Activated naive CD4-positive, alpha-beta T cell treated with anti-CD3 and anti-CD28 coated beads for 36 hours (primary cell): ENCODE measurements at regions of chr2 and their contacts with region 1.

Region 1: DNA sequence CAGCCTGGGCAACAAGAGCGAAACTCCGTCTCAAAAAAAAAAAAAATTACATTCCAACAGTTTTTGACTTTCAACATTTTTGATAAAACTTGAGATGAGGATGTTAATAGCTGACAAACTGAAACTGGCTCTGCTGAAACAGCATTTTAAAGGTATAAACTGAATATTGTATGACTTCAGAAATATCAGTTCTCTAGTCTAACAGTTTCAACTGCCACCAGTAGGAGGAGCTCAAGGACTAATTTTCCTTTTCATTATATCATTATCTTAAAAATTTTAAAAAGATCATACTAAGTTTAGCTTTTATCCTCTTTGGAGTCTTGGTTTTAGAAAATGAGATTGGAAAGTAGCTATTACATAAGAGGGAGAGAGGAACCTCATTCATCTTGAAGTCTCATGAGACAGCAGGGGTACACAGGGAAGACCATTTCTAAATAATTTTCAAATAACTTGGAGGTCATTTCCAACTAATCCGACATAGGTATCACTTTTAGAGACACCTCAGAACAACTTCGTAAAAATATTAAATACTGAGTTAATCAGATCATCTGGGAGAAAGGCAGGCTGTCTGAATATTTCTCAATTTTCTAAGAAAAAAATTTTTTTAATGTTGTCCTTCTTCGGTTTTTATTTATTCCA is 37.6 kb upstream of the MCM6 start:
- DNase-seq: peak; percentile 65
- H3K4me3 Mint-ChIP-seq: no peak overlapping the region
- H3K27ac Mint-ChIP-seq: no peak overlapping the region
- H3K4me1 Mint-ChIP-seq: peaks cover 10% of the 10 kb centered on the region
- H3K27me3 Mint-ChIP-seq: no peaks in the 10 kb centered on the region

Region 2: GRCh38 chr2:135424839-135425238 is 489.0 kb before region 1 on chr2:
- CTCF ChIA-PET with region 1: no interaction called
- intact Hi-C with region 1: no loop called
- DNase-seq: no peak
- H3K4me3 Mint-ChIP-seq: no peak overlapping the region
- H3K27ac Mint-ChIP-seq: no peak overlapping the region
- H3K4me1 Mint-ChIP-seq: no peaks in the 10 kb centered on the region
- H3K27me3 Mint-ChIP-seq: no peaks in the 10 kb centered on the region

Region 3: DNA sequence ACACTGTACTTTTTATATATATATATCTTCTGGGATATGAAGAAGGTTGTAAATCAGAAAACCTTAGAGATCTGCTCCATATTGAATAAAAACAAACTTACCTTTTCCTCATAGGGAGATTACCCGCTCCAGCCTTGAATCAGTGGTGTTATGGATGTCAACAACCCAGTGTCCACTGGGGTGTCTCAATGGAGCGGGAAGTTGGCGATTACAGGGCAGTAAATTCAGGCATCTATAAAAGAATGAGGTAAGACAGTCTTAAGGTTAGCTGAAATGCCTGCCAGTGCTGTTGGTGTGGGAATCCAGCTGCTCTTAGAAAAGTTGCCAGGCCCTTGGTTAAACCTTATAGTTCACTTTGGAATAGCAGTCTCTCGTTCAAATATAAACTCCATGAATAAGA is 280.3 kb before region 1 on chr2:
- CTCF ChIA-PET with region 1: no interaction called
- intact Hi-C with region 1: no loop called
- DNase-seq: no peak
- H3K4me3 Mint-ChIP-seq: no peak overlapping the region
- H3K27ac Mint-ChIP-seq: no peak overlapping the region
- H3K4me1 Mint-ChIP-seq: peaks cover 10% of the 10 kb centered on the region
- H3K27me3 Mint-ChIP-seq: no peaks in the 10 kb centered on the region

Region 4: DNA sequence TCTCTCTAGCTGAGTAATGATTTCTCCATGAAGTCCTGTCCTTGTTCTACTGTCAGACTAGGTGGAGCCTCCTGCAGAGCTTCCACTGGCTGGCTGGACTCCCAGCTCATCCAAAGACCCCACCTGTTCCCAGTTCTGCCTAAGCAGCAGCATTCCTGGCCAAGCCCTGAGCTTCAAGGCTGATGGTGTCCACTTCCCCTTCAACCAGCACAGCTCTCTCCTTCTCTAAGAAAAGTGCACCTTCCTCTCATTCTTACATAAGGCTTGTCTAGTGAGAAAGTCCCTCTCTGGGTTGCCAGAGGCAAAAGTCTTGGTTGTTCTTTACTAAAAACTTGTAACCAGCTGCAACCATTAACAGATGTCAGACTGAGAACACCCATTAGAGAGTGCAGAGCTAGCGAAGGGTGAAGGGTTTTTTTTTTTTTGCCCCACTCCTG is 145.2 kb after region 1 on chr2:
- CTCF ChIA-PET with region 1: interaction called, 4 read pairs
- intact Hi-C with region 1: loop called (anchors 2 kb)
- DNase-seq: no peak
- H3K4me3 Mint-ChIP-seq: no peak overlapping the region
- H3K27ac Mint-ChIP-seq: no peak overlapping the region
- H3K4me1 Mint-ChIP-seq: peaks cover 59% of the 10 kb centered on the region
- H3K27me3 Mint-ChIP-seq: no peaks in the 10 kb centered on the region

Region 5: DNA sequence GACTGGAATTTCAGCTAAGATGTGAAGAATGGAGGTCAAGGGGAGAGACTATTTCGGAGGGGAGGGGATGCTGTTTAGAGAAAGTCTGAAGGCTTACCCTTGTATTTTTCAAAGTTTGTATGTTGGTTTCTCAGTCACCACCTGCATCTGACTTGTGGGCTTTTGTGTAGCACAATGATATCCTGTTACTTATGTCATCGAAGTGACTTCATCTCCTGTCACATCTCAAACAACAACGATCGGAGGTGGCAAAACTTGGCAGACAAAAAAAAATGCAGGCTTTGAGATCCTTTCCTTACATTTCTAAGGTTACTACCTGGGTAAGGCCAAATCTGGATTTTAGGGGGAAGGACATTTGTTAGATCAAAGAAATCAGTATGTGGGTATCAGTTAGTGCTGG is 215.8 kb after region 1 on chr2:
- CTCF ChIA-PET with region 1: interaction called, 14 read pairs
- intact Hi-C with region 1: loop called (anchors 1 kb)
- DNase-seq: peak; percentile 57
- H3K4me3 Mint-ChIP-seq: peak overlapping the region; percentile 61
- H3K27ac Mint-ChIP-seq: peak overlapping the region; percentile 88
- H3K4me1 Mint-ChIP-seq: peaks cover 95% of the 10 kb centered on the region
- H3K27me3 Mint-ChIP-seq: no peaks in the 10 kb centered on the region

Region 6: GRCh38 chr2:136212423-136213378 is 298.9 kb after region 1 on chr2:
- CTCF ChIA-PET with region 1: interaction called, 10 read pairs
- intact Hi-C with region 1: loop called (anchors 1 kb)
- DNase-seq: peak; percentile 67
- H3K4me3 Mint-ChIP-seq: no peak overlapping the region
- H3K27ac Mint-ChIP-seq: peak overlapping the region; percentile 3
- H3K4me1 Mint-ChIP-seq: peaks cover 43% of the 10 kb centered on the region
- H3K27me3 Mint-ChIP-seq: no peaks in the 10 kb centered on the region

Region 7: GRCh38 chr2:136255648-136256463 is 342.0 kb after region 1 on chr2:
- CTCF ChIA-PET with region 1: interaction called, 5 read pairs
- intact Hi-C with region 1: loop called (anchors 5 kb)
- DNase-seq: peak; percentile 66
- H3K4me3 Mint-ChIP-seq: no peak overlapping the region
- H3K27ac Mint-ChIP-seq: no peak overlapping the region
- H3K4me1 Mint-ChIP-seq: peaks cover 30% of the 10 kb centered on the region
- H3K27me3 Mint-ChIP-seq: peaks cover 2% of the 10 kb centered on the region

Region 8: DNA sequence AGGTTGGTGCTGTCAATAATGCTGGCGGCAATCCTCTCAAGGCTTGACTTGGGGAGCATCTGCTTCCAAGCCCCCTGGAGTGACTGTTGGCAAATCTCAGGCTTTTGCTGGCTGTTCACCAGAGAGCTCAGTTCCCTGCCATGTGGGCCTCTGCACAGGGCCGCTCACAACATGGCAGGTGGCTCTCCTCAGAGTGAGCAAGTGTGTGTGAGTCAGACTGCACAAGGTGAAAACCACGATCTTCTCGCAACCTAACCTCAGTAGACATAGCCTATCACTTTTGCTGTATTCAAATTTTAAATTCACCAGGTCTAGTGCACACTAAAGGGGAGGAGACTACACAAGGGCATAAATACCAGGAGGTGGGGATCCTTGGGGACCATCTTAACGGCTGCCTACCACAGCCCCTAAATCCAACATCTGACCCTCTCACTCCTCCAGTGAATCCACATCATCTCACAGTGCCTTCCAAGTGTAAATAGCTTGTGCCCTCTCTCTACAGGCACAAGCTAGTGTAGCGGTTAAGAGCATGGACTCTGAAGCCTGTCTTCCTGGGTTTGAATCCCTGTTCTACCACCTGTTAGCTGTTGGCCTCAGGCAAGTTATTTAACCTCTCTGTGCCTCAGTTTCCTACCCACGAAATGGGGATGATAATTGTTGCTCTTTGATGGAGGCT is 391.8 kb after region 1 on chr2:
- CTCF ChIA-PET with region 1: no interaction called
- intact Hi-C with region 1: loop called (anchors 5 kb)
- DNase-seq: peak; percentile 85
- H3K4me3 Mint-ChIP-seq: no peak overlapping the region
- H3K27ac Mint-ChIP-seq: peak overlapping the region; percentile 81
- H3K4me1 Mint-ChIP-seq: peaks cover 21% of the 10 kb centered on the region
- H3K27me3 Mint-ChIP-seq: no peaks in the 10 kb centered on the region

Region 9: GRCh38 chr2:137838255-137839092 is 1924.6 kb after region 1 on chr2:
- CTCF ChIA-PET with region 1: no interaction called
- intact Hi-C with region 1: loop called (anchors 5 kb)
- DNase-seq: no peak
- H3K4me3 Mint-ChIP-seq: no peak overlapping the region
- H3K27ac Mint-ChIP-seq: no peak overlapping the region
- H3K4me1 Mint-ChIP-seq: no peaks in the 10 kb centered on the region
- H3K27me3 Mint-ChIP-seq: peaks cover 10% of the 10 kb centered on the region